K562 (cell line): ENCODE measurements at regions of chr6 and their contacts with region 1.

Region 1: DNA sequence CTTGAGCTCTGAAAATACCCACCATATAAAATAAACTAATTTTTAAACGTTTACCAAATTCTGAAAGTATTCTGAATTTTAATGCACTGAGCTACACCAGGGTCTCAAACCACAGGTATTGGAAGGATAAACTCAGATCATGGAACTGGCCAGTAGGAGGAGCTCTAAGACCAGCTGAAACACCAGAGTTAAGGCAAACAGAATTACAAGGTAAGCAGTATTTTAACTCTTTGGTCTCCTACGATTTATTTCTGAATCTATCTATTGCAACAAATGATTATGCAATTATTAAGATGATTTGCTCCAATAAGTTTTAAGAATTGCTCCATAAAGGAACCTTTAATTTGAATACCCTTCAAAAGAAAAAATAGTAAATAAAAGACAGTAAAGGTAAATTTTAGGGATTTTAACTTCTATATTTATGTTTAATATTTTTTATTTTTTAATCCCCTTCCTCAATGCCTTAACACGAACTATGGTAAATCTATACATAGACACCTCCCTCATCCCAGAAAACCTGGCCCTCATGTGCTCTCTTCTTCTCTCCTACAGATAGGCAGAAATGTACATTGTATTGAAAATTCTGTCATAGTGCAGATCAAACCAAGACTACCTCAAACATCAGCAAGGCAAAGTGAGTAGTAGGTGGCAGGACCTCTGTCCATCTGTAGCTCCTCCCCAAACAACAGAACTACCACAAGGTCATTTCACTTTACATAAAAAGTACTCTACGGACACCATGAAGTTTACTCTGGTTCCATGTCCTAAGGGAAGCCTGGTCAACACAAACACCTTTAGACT is 58.4 kb downstream of the SMLR1 start:
- DNase-seq: peak; percentile 58 to 82 (median 68)
- ATAC-seq: peak; percentile 98
- H3K4me3 ChIP-seq: no peak overlapping the region
- H3K27ac ChIP-seq: no peak overlapping the region
- H3K4me1 ChIP-seq: no peaks in the 10 kb centered on the region
- H3K27me3 ChIP-seq: no peaks in the 10 kb centered on the region
- CTCF ChIP-seq: peak; percentile 75 to 92 (median 81)
- EP300 ChIP-seq: no peak
- POLR2A ChIP-seq: no peak
- RAD21 ChIP-seq: peak; percentile 94 to 98

Region 2: GRCh38 chr6:131116749-131117360 is 231.3 kb after region 1 on chr6:
- CTCF ChIA-PET with region 1: interaction called, 27 read pairs
- POLR2A ChIA-PET with region 1: no interaction called
- in situ Hi-C with region 1: loop called (anchors 10 kb)
- intact Hi-C with region 1: loop called (anchors 1 kb)
- DNase-seq: peak; percentile 22 to 55 (median 40)
- ATAC-seq: peak; percentile 82
- H3K4me3 ChIP-seq: no peak overlapping the region
- H3K27ac ChIP-seq: no peak overlapping the region
- H3K4me1 ChIP-seq: no peaks in the 10 kb centered on the region
- H3K27me3 ChIP-seq: no peaks in the 10 kb centered on the region
- CTCF ChIP-seq: peak; percentile 37 to 63 (median 42); a peak in 4 of 6 replicates
- EP300 ChIP-seq: no peak
- POLR2A ChIP-seq: no peak
- RAD21 ChIP-seq: peak; percentile 83 to 86

Region 3: DNA sequence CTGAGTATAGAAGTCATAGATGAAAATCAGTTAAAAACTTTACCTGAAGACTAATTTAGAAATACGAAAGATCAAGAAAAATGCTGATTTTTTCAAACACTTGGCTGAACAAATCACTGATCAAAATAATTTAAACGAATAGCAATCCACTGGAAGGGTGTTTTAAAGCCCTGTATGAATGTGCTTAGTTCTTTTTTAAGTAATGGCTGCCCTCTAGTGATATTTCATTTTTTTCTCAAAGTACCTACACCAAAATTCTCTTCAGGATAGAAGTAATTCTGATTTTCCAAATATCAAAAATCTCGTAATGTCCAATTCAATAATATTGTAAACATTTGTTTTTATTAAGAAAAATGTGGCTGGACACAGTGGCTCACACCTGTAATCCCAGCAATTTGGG is 282.2 kb after region 1 on chr6:
- CTCF ChIA-PET with region 1: interaction called, 6 read pairs
- POLR2A ChIA-PET with region 1: no interaction called
- in situ Hi-C with region 1: no loop called
- intact Hi-C with region 1: loop called (anchors 1 kb)
- DNase-seq: no peak
- ATAC-seq: no peak
- H3K4me3 ChIP-seq: no peak overlapping the region
- H3K27ac ChIP-seq: no peak overlapping the region
- H3K4me1 ChIP-seq: no peaks in the 10 kb centered on the region
- H3K27me3 ChIP-seq: no peaks in the 10 kb centered on the region
- CTCF ChIP-seq: 0 out of 6 replicates have a peak, but pooled peaks of 1 of the 3 experiments have one; percentile 24
- EP300 ChIP-seq: no peak
- POLR2A ChIP-seq: no peak
- RAD21 ChIP-seq: peak in 1 of 2 experiments; percentile 50; a peak in 3 of 4 replicates

Region 4: DNA sequence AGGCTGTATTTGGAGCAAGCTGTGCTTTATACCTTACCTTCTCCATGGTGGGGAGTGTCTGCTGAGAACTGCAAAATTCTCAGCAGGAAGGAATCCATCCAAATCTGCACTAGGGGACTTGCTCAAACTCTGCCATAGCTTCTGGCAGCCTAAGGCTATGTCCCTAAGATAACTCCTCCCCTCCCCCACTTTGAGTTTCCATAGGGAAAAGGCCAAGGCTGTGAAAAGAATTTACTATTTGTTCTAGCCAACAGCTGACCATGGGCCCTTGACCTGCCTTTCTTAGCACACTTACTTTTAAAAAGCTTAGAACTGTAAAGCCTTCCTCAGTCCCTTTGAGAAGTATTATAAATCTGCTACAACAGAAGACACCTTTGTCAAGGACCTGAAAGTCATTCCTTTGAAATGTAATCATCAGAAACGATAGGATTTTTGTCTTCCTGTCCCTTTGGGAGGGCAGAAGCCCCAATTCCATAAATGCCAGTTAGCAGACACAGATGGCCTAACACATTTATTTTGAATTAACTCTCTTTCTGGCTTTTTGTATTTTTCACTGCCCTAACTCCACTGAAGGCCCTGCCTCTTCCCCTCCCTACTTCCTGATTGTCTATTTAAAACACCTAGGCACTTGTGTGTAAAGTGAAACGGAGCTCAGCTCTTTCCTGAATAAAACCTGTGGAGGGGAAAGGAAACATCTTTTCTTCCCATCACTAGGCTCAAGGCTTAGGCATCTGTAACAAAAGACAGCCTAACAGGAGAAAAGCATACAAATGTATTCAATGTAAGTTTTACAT is 406.8 kb after region 1 on chr6:
- CTCF ChIA-PET with region 1: no interaction called
- POLR2A ChIA-PET with region 1: no interaction called
- in situ Hi-C with region 1: no loop called
- intact Hi-C with region 1: no loop called
- DNase-seq: no peak
- ATAC-seq: no peak
- H3K4me3 ChIP-seq: no peak overlapping the region
- H3K27ac ChIP-seq: no peak overlapping the region
- H3K4me1 ChIP-seq: no peaks in the 10 kb centered on the region
- H3K27me3 ChIP-seq: peaks cover 8 to 12% of the 10 kb centered on the region in 2 experiments; a peak in 4 of 5 replicates
- CTCF ChIP-seq: no peak
- EP300 ChIP-seq: no peak
- POLR2A ChIP-seq: no peak
- RAD21 ChIP-seq: no peak